PC-9 (cell line): ENCODE measurements at regions of chr6 and their contacts with region 1.

Region 1: GRCh38 chr6:18004256-18004985 is 17.0 kb upstream of the KIF13A start:
- DNase-seq: no peak
- H3K4me3 ChIP-seq: no peak overlapping the region
- H3K27ac ChIP-seq: no peak overlapping the region
- H3K4me1 ChIP-seq: no peaks in the 10 kb centered on the region
- H3K27me3 ChIP-seq: no peaks in the 10 kb centered on the region
- CTCF ChIP-seq: no peak

Region 2: GRCh38 chr6:17790489-17790888 is 213.9 kb before region 1 on chr6:
- CTCF ChIA-PET with region 1: no interaction called
- POLR2A ChIA-PET with region 1: interaction called, 18 read pairs
- intact Hi-C with region 1: no loop called
- DNase-seq: no peak
- H3K4me3 ChIP-seq: no peak overlapping the region
- H3K27ac ChIP-seq: no peak overlapping the region
- H3K4me1 ChIP-seq: no peaks in the 10 kb centered on the region
- H3K27me3 ChIP-seq: no peaks in the 10 kb centered on the region
- CTCF ChIP-seq: no peak

Region 3: DNA sequence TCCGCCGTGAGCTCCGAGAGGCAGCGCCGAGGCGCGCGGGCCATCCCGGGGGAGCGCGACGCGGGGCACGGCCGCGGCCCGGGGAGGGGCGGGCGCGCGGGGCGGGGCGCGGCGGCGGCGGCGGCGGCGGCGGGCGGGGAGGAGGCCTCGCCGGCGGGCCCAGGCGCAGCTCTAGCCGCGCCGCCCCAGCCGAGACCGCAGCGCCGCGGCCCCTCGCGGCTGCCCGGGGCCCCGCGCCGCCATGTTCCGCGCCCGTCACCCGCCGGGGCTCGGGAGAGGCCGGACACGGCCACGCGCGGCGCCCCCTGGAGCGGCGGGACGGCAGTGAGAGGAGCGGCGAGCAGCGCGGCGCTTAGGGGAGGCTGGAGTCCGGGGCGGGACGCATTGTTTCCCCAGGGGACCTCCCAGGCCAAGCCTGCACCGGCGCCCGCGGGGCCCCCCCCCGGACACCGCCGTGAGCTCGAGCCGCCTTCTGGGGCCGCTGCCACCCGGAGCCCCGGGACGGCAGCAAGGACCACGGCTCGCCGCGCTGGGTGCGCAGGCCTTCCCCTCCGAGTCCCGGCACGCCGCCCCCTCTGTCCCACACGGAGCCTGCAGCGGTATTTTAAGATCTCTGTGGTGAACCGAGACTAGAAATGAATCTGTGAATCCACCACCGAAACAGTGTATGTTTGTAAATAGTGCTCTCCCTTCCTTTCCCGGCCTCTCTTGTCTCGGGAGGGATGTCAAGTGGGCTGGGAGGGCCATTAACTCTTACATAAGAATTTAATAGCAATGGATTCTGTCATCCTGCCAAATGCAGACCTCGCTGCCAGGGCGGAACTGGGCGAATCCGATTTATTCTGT is 16.6 kb before region 1 on chr6 and contains the start of gene KIF13A:
- CTCF ChIA-PET with region 1: no interaction called
- POLR2A ChIA-PET with region 1: no interaction called
- intact Hi-C with region 1: no loop called
- DNase-seq: peak; percentile 46 to 69
- H3K4me3 ChIP-seq: peak within 1 kb of the TSS; percentile 98
- H3K27ac ChIP-seq: peak within 1 kb of the TSS; percentile 45
- H3K4me1 ChIP-seq: peaks cover 59% of the 10 kb centered on the region
- H3K27me3 ChIP-seq: no peaks in the 10 kb centered on the region
- CTCF ChIP-seq: no peak
- total RNA-seq, gene KIF13A: 48.6 and 52.2 TPM in 2 replicates

Region 4: GRCh38 chr6:18022398-18023231 is 18.2 kb after region 1 on chr6:
- CTCF ChIA-PET with region 1: no interaction called
- POLR2A ChIA-PET with region 1: no interaction called
- intact Hi-C with region 1: loop called (anchors 2 kb)
- DNase-seq: peak; percentile 46 to 51
- H3K4me3 ChIP-seq: no peak overlapping the region
- H3K27ac ChIP-seq: no peak overlapping the region
- H3K4me1 ChIP-seq: peaks cover 11% of the 10 kb centered on the region
- H3K27me3 ChIP-seq: no peaks in the 10 kb centered on the region
- CTCF ChIP-seq: no peak